Activated CD4-positive, alpha-beta T cell treated with anti-CD3 and anti-CD28 coated beads for 36 hours (primary cell): ENCODE measurements at regions of chr19 and their contacts with region 1.

Region 1: GRCh38 chr19:49301165-49301865 is 23.7 kb downstream of the SLC6A16 start:
- DNase-seq: peak; percentile 92
- ATAC-seq: peak; percentile 100
- H3K4me3 Mint-ChIP-seq: no peak overlapping the region
- H3K27ac Mint-ChIP-seq: no peak overlapping the region
- H3K4me1 Mint-ChIP-seq: peaks cover 3% of the 10 kb centered on the region
- H3K27me3 Mint-ChIP-seq: no peaks in the 10 kb centered on the region

Region 2: DNA sequence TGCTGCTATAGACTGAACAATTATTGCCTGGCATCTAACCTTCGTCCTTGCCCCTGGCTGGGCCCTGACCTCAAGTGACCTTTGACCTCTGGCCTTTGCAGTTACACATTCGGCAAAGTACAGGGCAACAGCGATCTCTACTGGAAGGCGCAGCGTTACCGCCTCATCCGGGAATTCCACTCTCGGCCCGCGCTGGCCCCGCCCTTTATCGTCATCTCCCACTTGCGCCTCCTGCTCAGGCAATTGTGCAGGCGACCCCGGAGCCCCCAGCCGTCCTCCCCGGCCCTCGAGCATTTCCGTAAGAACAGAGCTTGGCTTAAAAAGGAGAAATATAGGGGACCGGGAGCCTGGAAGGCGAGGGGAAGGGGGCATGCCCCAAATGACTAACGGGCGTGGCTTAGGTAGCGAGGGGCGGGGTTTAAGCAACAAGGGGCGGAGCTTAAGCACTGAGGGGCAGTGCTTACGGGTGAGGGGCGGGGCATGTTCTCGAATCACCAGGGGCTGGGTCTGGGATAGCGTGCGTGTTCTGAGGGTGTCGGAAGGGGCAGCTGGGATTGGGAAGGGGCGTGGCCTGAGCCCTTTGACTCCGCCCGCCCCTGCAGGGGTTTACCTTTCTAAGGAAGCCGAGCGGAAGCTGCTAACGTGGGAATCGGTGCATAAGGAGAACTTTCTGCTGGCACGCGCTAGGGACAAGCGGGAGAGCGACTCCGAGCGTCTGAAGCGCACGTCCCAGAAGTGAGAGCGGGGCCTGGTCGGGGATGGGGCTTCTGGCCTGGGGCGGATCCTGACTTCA is 91.0 kb before region 1 on chr19:
- CTCF ChIA-PET with region 1: no interaction called
- POLR2A ChIA-PET with region 1: no interaction called
- intact Hi-C with region 1: no loop called
- DNase-seq: peak; percentile 80
- ATAC-seq: peak; percentile 96
- H3K4me3 Mint-ChIP-seq: peak overlapping the region; percentile 63
- H3K27ac Mint-ChIP-seq: peak overlapping the region; percentile 58
- H3K4me1 Mint-ChIP-seq: peaks cover 7% of the 10 kb centered on the region
- H3K27me3 Mint-ChIP-seq: peaks cover 2% of the 10 kb centered on the region

Region 3: GRCh38 chr19:49255674-49256073 is 45.6 kb before region 1 on chr19:
- CTCF ChIA-PET with region 1: no interaction called
- POLR2A ChIA-PET with region 1: no interaction called
- intact Hi-C with region 1: no loop called
- DNase-seq: no peak
- ATAC-seq: no peak
- H3K4me3 Mint-ChIP-seq: no peak overlapping the region
- H3K27ac Mint-ChIP-seq: no peak overlapping the region
- H3K4me1 Mint-ChIP-seq: no peaks in the 10 kb centered on the region
- H3K27me3 Mint-ChIP-seq: peaks cover 34% of the 10 kb centered on the region

Region 4: GRCh38 chr19:49272184-49272583 is 29.1 kb before region 1 on chr19:
- CTCF ChIA-PET with region 1: interaction called, 3 read pairs
- POLR2A ChIA-PET with region 1: no interaction called
- intact Hi-C with region 1: loop called (anchors 5 kb)
- DNase-seq: no peak
- ATAC-seq: peak; percentile 75
- H3K4me3 Mint-ChIP-seq: no peak overlapping the region
- H3K27ac Mint-ChIP-seq: no peak overlapping the region
- H3K4me1 Mint-ChIP-seq: peaks cover 3% of the 10 kb centered on the region
- H3K27me3 Mint-ChIP-seq: peaks cover 10% of the 10 kb centered on the region

Region 5: GRCh38 chr19:49318296-49318695 is 17.0 kb after region 1 on chr19:
- CTCF ChIA-PET with region 1: interaction called, 10 read pairs
- POLR2A ChIA-PET with region 1: no interaction called
- intact Hi-C with region 1: no loop called
- DNase-seq: no peak
- ATAC-seq: no peak
- H3K4me3 Mint-ChIP-seq: no peak overlapping the region
- H3K27ac Mint-ChIP-seq: no peak overlapping the region
- H3K4me1 Mint-ChIP-seq: peaks cover 5% of the 10 kb centered on the region
- H3K27me3 Mint-ChIP-seq: no peaks in the 10 kb centered on the region

Region 6: DNA sequence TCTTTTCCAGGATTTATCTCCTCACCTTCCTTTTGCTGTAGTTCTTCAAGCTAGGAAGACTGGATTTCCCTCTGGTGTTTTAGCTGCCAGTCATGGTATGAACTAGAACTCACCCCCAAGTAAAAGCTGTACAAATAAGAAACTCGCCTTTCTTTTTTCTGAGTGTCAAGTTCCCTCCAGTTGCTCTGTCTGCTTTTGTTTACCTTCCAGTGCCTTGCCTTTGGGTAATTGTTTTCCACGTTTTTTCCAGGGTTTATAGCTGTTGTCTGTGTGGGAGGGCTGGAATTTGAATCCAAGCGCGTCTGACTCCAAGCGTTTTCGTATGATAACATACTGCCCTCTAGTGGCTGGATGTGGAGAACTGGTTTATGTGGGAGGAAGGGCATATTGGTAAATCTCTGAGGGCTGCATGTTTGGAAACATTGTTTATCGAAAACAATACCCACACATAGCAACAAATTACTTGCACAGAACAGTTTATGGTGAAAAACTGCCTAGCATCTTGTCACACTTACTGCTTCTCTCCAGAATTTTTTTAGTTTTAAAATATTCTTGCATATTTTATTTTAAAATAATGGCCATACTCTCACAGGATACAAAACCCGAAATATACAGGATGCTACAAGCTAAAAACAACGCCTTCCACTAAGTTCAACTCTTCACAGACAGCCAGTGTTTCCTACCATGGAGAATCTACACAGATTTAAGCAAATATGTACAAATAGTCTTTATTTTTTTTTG is 245.7 kb after region 1 on chr19:
- CTCF ChIA-PET with region 1: no interaction called
- POLR2A ChIA-PET with region 1: no interaction called
- intact Hi-C with region 1: no loop called
- DNase-seq: peak; percentile 76
- ATAC-seq: peak; percentile 76
- H3K4me3 Mint-ChIP-seq: peak overlapping the region; percentile 59
- H3K27ac Mint-ChIP-seq: peak overlapping the region; percentile 75
- H3K4me1 Mint-ChIP-seq: peaks cover 45% of the 10 kb centered on the region
- H3K27me3 Mint-ChIP-seq: no peaks in the 10 kb centered on the region